Activated B cell treated with CpG ODN at 0.5 μM for 24 hours (primary cell): ENCODE measurements at regions of chr9 and their contacts with region 1.

Region 1: GRCh38 chr9:21381448-21382339 is 3.5 kb downstream of the IFNA2 start:
- DNase-seq: peak; percentile 54
- ATAC-seq: peak; percentile 99
- H3K4me3 Mint-ChIP-seq: no peak overlapping the region
- H3K27ac Mint-ChIP-seq: peak overlapping the region; percentile 41
- H3K4me1 Mint-ChIP-seq: peaks cover 25% of the 10 kb centered on the region
- H3K27me3 Mint-ChIP-seq: peaks cover 16% of the 10 kb centered on the region
- CTCF ChIP-seq: no peak

Region 2: DNA sequence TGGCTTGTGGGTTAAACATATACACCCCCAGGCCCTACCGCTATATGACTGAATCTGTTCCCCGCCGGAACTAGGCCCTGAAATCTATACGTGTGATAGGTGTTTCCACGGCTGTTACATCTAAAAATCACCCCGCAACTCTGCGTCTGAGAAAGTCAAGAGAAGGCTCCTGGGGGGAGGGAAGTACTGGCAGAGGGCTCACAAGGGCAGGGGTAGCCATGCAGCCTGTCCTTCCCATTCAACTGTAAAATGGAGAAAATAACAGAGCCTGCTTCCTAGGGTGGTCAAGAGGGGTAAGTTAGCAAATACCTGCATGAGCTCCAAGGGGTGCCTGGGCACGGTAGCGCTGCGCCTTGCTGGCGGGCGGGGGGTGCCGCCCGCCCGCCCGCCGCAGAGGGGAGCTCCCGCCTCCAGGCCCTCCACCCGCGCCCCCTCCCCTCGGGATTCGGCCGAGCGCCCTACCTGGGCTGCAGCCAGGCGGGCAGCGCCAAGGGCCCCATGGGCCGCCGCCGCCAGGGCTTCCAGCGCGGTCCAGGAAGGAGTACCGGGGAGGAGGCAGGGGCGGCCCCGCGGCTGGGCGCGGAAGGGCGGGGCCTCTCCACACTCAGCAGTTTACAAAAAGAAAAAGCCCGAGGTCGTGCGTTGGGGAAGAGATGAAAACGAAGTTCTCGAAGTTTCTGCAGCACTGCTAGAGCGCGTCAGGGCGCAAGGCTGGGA is 350.4 kb before region 1 on chr9 and contains the start of gene HACD4:
- CTCF ChIA-PET with region 1: no interaction called
- POLR2A ChIA-PET with region 1: no interaction called
- intact Hi-C with region 1: no loop called
- DNase-seq: peak; percentile 59
- ATAC-seq: peak; percentile 78
- H3K4me3 Mint-ChIP-seq: peak within 1 kb of the TSS; percentile 81
- H3K27ac Mint-ChIP-seq: peak within 1 kb of the TSS; percentile 70
- H3K4me1 Mint-ChIP-seq: peaks cover 17% of the 10 kb centered on the region
- H3K27me3 Mint-ChIP-seq: no peaks in the 10 kb centered on the region
- CTCF ChIP-seq: no peak
- total RNA-seq, gene HACD4: 3.3 and 4.1 TPM in 2 replicates

Region 3: GRCh38 chr9:21362287-21362686 is 19.4 kb before region 1 on chr9:
- CTCF ChIA-PET with region 1: interaction called, 3 read pairs
- POLR2A ChIA-PET with region 1: no interaction called
- intact Hi-C with region 1: loop called (anchors 2 kb)
- DNase-seq: no peak
- ATAC-seq: no peak
- H3K4me3 Mint-ChIP-seq: no peak overlapping the region
- H3K27ac Mint-ChIP-seq: no peak overlapping the region
- H3K4me1 Mint-ChIP-seq: peaks cover 13% of the 10 kb centered on the region
- H3K27me3 Mint-ChIP-seq: peaks cover 23% of the 10 kb centered on the region
- CTCF ChIP-seq: no peak

Region 4: DNA sequence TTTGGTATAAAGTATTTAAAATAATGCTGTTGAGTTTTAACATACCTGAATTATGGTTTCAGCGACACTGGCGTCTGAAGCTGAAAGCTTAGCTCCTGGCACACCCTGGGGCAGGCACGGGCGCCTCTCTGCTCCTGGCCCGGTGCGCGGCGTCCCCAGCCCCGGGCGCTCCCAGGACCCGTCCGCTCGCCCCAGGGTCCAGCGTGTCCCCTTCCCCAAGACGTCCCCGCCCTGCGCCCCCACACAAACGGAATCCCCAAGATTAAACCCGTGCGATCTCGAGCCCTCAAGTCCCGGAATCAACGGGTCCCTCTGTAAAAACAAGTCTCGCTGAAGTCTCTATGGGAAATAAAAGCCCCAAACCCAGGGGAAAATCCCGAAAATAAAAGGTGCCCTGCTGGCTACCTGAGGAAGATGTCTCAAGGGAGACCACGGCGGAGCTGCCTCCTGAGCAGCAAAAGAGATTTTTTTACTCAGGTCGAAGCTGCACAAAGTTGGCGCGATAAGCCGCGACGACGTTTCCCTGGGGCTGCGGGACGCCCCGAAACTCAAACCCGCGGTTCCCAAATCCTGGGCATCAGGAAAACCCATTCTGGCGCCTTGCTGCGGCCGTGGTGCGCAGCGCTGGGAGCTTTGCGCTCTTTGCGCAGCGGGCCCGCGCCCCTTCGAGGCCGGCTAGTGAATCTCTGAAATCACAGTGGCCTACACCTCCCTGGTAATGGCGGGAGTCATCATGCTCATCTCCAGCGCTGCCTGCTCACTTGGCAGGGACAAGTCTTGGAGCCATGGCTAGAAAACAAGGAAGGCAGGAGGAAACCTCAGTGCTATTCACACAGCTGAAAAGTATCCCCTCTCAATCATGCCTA is 20.9 kb after region 1 on chr9:
- CTCF ChIA-PET with region 1: no interaction called
- POLR2A ChIA-PET with region 1: no interaction called
- intact Hi-C with region 1: loop called (anchors 2 kb)
- DNase-seq: no peak
- ATAC-seq: no peak
- H3K4me3 Mint-ChIP-seq: peak overlapping the region; percentile 42
- H3K27ac Mint-ChIP-seq: no peak overlapping the region
- H3K4me1 Mint-ChIP-seq: peaks cover 11% of the 10 kb centered on the region
- H3K27me3 Mint-ChIP-seq: peaks cover 53% of the 10 kb centered on the region
- CTCF ChIP-seq: no peak

Region 5: GRCh38 chr9:21443849-21444625 is 62.3 kb after region 1 on chr9:
- CTCF ChIA-PET with region 1: no interaction called
- POLR2A ChIA-PET with region 1: interaction called, 14 read pairs
- intact Hi-C with region 1: loop called (anchors 1 kb)
- DNase-seq: no peak
- ATAC-seq: peak; percentile 95
- H3K4me3 Mint-ChIP-seq: no peak overlapping the region
- H3K27ac Mint-ChIP-seq: peak overlapping the region; percentile 30
- H3K4me1 Mint-ChIP-seq: peaks cover 12% of the 10 kb centered on the region
- H3K27me3 Mint-ChIP-seq: peaks cover 23% of the 10 kb centered on the region
- CTCF ChIP-seq: no peak

Region 6: DNA sequence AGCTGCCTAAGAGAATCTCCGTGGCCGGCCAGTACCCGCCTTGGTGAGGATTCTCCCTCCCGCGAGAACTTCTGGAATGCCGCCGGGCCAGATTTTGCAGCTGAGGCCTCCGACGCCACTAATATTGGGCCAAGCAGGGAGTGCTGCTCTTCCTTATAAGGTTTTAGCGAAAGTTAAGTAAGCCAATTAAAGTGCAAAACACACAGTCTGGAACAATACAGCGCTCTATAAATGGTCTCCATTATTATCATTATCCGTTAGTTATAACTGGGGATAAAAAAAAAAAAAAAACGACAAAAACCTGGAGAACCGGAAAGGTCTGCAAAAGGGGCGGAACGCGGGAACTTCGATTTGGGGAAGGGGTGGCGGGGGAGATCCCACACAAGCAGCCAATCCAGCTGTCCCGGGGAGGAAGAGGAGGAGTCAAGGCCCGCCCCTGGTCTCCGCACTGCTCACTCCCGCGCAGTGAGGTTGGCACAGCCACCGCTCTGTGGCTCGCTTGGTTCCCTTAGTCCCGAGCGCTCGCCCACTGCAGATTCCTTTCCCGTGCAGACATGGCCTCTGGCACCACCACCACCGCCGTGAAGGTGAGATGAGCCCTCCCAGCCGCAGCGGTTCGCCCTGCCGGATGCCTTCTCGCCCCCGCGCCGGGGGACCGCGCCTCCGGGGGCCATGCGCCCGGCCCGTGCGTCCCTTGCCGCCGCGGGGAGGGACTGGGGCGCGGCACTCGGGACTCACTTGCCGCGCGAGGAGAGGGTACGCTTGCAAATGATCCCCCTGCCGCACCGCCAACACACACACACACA is 420.7 kb after region 1 on chr9 and contains the start of gene MTAP:
- CTCF ChIA-PET with region 1: no interaction called
- POLR2A ChIA-PET with region 1: no interaction called
- intact Hi-C with region 1: loop called (anchors 1 kb)
- DNase-seq: peak; percentile 68
- ATAC-seq: peak; percentile 88
- H3K4me3 Mint-ChIP-seq: peak within 1 kb of the TSS; percentile 99
- H3K27ac Mint-ChIP-seq: peak within 1 kb of the TSS; percentile 91
- H3K4me1 Mint-ChIP-seq: peaks cover 53% of the 10 kb centered on the region
- H3K27me3 Mint-ChIP-seq: peaks cover 15% of the 10 kb centered on the region
- CTCF ChIP-seq: no peak
- total RNA-seq, gene MTAP: 30.4 and 43.2 TPM in 2 replicates

Region 7: DNA sequence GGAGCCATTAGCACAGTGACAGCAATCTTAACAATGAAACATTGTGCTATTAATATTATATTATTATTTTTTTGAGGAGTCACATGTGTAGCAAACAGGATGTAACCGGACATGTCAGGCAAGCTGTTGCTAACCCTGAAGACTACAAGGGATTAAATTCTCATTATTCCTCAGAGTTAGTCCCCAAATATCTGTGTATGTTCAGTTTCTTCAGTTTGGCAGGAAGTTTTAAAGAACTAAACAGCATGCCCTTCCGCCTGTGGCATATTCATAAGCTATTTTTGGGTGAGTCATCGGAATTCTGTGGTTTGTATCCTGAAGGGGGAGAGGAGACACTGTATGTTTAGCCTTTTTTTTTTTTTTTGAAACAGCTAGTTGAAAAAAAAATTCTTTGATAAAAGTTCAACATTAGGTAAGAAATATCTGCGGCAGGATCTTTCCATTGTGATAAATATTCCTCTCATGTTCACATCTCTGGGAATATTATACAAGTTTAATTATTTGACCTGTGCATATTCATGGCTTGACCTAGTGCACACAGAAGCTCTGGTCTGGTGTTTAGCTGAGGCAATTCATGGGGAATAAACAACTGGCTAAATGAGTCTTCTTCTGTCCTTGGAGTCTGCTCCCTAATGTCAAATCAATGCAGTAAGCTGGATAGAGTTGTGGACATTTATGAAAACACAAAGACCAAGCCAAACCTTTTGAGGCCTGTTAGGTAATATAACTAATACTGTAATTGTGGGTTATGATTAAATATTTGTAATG is 830.1 kb after region 1 on chr9:
- CTCF ChIA-PET with region 1: no interaction called
- POLR2A ChIA-PET with region 1: no interaction called
- intact Hi-C with region 1: loop called (anchors 10 kb)
- DNase-seq: no peak
- ATAC-seq: no peak
- H3K4me3 Mint-ChIP-seq: no peak overlapping the region
- H3K27ac Mint-ChIP-seq: no peak overlapping the region
- H3K4me1 Mint-ChIP-seq: peaks cover 33% of the 10 kb centered on the region
- H3K27me3 Mint-ChIP-seq: no peaks in the 10 kb centered on the region
- CTCF ChIP-seq: no peak